AG04450 (cell line): ENCODE measurements at regions of chr2 and their contacts with region 1.

Region 1: DNA sequence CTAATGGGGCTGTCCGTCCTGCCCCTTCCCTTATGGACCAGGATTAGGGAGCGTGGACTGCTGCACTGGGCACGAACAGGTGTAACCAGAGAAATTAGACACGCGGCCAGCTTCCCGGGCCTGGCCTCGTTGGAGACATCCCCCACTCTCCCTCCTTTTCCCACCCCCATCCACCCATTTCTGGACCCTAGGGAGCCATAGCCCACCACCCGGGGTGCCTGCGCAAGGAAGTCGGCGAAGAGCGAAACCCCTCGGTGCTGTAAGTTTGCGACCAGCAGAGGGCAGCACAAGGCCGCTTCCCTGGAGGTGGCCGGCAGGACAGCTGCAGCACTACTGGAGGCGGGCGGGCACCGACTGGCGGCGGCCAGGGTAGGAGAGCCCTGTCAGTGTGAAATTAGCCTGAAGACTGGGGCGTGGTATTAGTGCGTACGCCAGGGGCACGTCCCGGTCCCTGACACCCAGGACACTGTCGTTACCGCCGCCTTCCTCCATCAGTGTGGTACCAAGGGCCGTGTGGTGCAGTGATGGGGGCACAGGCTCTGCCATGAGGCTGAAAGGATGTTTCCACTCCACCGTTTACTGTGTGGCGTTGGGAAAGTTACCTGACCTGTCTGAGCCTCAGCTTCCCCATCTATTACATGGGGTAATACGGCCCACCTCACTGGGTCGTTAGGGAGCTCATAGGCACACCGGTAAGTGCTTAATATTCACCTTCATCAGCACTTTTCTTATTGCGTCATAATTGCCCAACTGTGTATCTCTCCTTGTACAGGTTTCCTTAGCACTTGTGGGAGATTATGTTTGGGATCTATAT is 36.0 kb upstream of the CD207 start:
- DNase-seq: peak; percentile 57
- H3K4me3 ChIP-seq: no peak overlapping the region
- H3K27ac ChIP-seq: no peak overlapping the region
- H3K27me3 ChIP-seq: peaks cover 29% of the 10 kb centered on the region
- CTCF ChIP-seq: peak; percentile 84

Region 2: GRCh38 chr2:70321370-70321769 is 550.2 kb before region 1 on chr2:
- CTCF ChIA-PET with region 1: no interaction called
- POLR2A ChIA-PET with region 1: no interaction called
- DNase-seq: no peak
- H3K4me3 ChIP-seq: no peak overlapping the region
- H3K27ac ChIP-seq: no peak overlapping the region
- H3K27me3 ChIP-seq: peaks cover 10% of the 10 kb centered on the region
- CTCF ChIP-seq: no peak

Region 3: DNA sequence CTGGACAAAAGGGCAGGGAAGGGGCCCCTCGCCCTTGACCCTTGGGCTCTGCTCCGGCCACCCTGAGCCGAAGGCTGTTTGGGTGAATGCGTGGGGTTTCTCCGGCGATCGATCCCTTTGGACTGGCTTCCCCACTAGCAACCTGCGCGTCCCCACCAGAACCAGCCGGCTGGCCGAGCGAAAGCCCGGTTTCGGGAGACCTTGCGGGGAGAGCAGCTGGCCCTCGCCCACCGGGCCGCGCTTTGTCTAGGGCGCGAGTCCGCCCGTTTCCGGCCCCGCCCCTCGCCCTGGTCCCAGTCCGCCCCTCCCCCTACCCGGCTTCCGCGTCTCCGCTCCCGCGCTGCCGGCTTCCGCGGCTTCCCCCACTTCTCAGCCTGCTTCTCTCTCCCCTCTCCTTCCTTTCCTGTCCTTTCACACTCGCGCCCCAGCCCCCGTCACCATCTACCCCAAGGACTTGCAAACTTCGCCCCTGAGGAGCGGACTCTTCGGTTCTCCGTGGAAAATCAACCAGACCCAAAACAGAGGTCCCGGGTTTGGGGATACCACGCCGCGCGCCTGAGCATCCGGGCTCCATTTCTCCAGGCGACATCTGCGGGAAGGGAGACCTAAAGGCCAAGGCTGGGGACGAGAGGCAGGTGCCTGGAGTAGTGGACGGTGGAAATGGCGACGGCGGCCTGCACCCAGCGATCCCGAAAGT is 16.1 kb after region 1 on chr2:
- CTCF ChIA-PET with region 1: interaction called, 20 read pairs
- POLR2A ChIA-PET with region 1: no interaction called
- DNase-seq: no peak
- H3K4me3 ChIP-seq: peak overlapping the region; percentile 47
- H3K27ac ChIP-seq: no peak overlapping the region
- H3K27me3 ChIP-seq: peaks cover 92% of the 10 kb centered on the region
- CTCF ChIP-seq: no peak

Region 4: GRCh38 chr2:70896765-70897202 is 25.2 kb after region 1 on chr2:
- CTCF ChIA-PET with region 1: interaction called, 13 read pairs
- POLR2A ChIA-PET with region 1: no interaction called
- DNase-seq: no peak
- H3K4me3 ChIP-seq: no peak overlapping the region
- H3K27ac ChIP-seq: no peak overlapping the region
- H3K27me3 ChIP-seq: peaks cover 80% of the 10 kb centered on the region
- CTCF ChIP-seq: no peak

Region 5: DNA sequence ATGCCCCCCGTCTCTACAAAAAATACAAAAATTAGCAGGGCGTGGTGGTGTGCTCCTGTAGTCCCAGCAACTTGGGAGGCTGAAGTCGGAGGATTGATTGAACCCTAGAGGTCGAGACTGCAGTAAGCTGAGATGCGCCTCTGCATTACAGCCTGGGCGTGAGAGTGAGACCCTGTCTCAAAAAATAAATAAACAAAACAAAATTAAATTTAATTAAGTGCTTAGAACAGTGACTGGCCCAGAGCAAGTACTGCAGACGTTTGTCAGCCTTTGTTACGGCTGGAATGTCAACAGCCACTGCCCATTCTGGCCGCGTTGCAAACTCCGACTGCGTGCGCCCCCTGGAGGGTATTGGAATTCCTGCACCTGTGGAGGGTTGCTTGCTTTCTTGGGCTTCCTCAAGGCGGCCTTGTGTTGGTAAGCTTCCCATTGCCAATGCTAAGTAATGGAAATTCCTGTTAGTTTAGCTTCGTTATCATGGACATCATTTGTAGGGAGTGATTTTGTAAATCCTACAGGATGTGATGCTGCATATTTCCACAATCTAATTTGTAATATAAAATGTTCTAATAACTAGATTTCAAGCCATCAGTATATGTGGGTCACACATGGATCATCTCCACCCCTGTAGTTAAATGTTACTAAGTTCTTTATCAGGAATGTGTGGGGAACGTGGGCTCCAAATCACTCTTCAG is 48.2 kb after region 1 on chr2:
- CTCF ChIA-PET with region 1: interaction called, 98 read pairs
- POLR2A ChIA-PET with region 1: no interaction called
- DNase-seq: peak; percentile 44
- H3K4me3 ChIP-seq: no peak overlapping the region
- H3K27ac ChIP-seq: no peak overlapping the region
- H3K27me3 ChIP-seq: no peaks in the 10 kb centered on the region
- CTCF ChIP-seq: peak; percentile 91

Region 6: GRCh38 chr2:70942396-70943204 is 71.0 kb after region 1 on chr2:
- CTCF ChIA-PET with region 1: interaction called, 205 read pairs
- POLR2A ChIA-PET with region 1: no interaction called
- DNase-seq: peak; percentile 4
- H3K4me3 ChIP-seq: no peak overlapping the region
- H3K27ac ChIP-seq: no peak overlapping the region
- H3K27me3 ChIP-seq: no peaks in the 10 kb centered on the region
- CTCF ChIP-seq: no peak

Region 7: DNA sequence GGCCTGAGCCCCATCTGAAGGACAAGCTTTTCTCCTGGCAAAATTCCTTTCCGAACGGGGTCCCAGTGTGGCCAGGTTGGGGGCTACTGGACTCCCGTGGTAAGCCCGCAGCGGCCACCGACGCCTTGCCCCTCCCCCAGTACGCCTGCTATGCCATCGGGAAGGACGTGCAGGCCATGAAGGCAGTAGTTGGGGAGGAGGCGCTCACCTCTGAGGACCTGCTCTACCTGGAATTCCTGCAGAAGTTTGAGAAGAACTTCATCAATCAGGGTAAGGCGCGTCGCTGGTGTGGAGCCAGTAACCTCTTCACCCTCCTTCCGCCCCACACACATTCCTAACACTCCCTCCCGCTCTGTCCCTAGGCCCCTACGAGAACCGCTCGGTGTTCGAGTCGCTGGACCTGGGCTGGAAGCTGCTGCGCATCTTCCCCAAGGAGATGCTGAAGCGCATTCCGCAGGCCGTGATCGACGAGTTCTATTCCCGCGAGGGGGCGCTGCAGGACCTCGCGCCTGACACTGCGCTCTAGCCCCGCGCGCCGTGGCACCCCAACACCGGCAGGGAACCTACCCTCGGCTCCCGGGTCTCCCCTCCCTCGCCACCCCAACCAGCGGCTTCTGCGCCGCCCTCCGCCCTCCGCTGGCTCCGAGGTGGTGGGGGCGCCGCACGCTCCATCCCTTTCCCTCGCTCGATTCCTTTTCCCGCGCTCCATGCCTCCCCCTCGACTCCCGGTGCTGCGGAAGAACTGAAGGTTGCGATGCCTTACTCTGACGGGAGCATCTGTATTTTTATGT is 93.2 kb after region 1 on chr2:
- CTCF ChIA-PET with region 1: interaction called, 30 read pairs
- POLR2A ChIA-PET with region 1: no interaction called
- DNase-seq: peak; percentile 29
- H3K4me3 ChIP-seq: peak overlapping the region; percentile 60
- H3K27ac ChIP-seq: no peak overlapping the region
- H3K27me3 ChIP-seq: peaks cover 9% of the 10 kb centered on the region
- CTCF ChIP-seq: peak; percentile 78